Heart left ventricle (tissue), 16 donors: ENCODE measurements at regions of chr22 and their contacts with region 1.

Region 1: GRCh38 chr22:46798366-46799350 is 36.2 kb downstream of the TBC1D22A start:
- DNase-seq: peak; percentile 56 to 86 (median 71)
- ATAC-seq: peak; percentile 35 to 86 (median 84)
- H3K4me3 ChIP-seq: no peak overlapping the region
- H3K27ac ChIP-seq: peak overlapping the region in 1 of 12 donors; percentile 27
- H3K4me1 ChIP-seq: peaks cover 0 to 17% (median 11%) of the 10 kb centered on the region in 12 donors
- H3K27me3 ChIP-seq: no peaks in the 10 kb centered on the region
- CTCF ChIP-seq: peak; percentile 85 to 94 (median 92)
- POLR2A ChIP-seq: no peak

Region 2: GRCh38 chr22:46355371-46355995 is 443.2 kb before region 1 on chr22:
- intact Hi-C with region 1: loop called in 1 of 10 experiments (anchors 10 kb)
- DNase-seq: peak; percentile 62 to 74 (median 71)
- ATAC-seq: peak; percentile 11 to 49 (median 18)
- H3K4me3 ChIP-seq: no peak overlapping the region
- H3K27ac ChIP-seq: peak overlapping the region in 4 of 12 donors; percentile 20 to 94 (median 57)
- H3K4me1 ChIP-seq: peaks cover 0 to 47% (median 17%) of the 10 kb centered on the region in 12 donors
- H3K27me3 ChIP-seq: no peaks in the 10 kb centered on the region
- CTCF ChIP-seq: peak; percentile 58 to 83 (median 73)
- POLR2A ChIP-seq: no peak

Region 3: GRCh38 chr22:46762238-46763050 is 36.2 kb before region 1 on chr22 and contains the start of gene TBC1D22A:
- intact Hi-C with region 1: loop called in 4 of 10 experiments (anchors 5 kb)
- DNase-seq: peak; percentile 93 to 98 (median 95)
- ATAC-seq: peak; percentile 94 to 96 (median 95)
- H3K4me3 ChIP-seq: peak within 1 kb of the TSS; percentile 70 to 99 (median 88)
- H3K27ac ChIP-seq: peak within 1 kb of the TSS; percentile 85 to 99 (median 94)
- H3K4me1 ChIP-seq: peaks cover 0 to 60% (median 36%) of the 10 kb centered on the region in 12 donors
- H3K27me3 ChIP-seq: no peaks in the 10 kb centered on the region
- CTCF ChIP-seq: peak in 3 of 12 donors; percentile 7 to 9 (median 7)
- POLR2A ChIP-seq: peak; percentile 85 to 98
- total RNA-seq, gene TBC1D22A: 14.0 to 30.7 (median 18.6) TPM

Region 4: DNA sequence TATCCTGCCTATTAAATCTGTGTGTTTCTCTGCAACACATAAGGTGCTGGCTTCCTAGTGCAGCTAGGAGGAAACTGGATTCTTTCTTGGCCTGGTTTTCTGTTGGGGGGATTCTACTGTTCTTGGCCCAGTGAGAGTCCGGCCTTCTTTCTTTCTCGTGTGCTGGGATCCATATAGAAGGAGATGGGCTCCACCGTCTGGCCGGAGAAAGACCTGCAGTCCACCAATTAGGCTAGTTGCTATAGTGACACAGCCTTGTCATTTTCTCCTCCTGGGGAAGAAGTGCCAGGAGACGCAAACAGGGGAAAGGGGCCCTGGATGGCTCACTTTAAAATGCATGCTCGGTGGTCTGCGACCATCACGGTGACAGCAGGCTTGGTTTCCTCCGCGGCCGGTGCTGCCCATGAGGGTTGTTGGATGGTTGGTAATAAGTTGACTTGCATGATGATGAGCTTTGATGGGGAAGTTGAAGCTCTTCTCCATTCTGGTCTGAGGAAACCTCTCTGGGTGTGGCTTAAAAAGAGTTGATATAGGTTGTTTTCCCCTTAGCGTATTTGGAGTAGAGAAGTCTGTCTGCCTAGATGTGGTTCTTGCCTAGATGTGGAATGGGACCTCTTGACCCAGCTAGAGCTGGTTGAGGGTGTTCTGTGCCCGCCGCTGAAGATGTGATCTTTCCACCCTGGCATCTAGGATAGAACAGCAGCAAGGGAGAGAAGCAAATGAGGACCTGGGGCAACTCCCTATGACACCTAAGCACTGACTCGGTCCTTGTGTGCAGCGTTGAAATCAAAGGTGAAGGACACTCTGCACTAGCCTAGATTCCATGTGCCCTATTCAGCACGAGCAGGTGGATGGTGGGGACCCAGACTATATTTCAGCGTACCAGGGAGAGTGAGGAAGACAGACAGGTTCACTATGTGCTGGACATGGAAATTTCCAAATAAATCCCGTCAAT is 1694.0 kb after region 1 on chr22:
- intact Hi-C with region 1: loop called in 4 of 10 experiments (anchors 5 to 10 kb)
- DNase-seq: peak in 3 of 5 donors; percentile 37 to 66 (median 45)
- ATAC-seq: peak; percentile 57 to 85 (median 66)
- H3K4me3 ChIP-seq: no peak overlapping the region
- H3K27ac ChIP-seq: no peak overlapping the region
- H3K4me1 ChIP-seq: peaks cover 0 to 15% (median 4%) of the 10 kb centered on the region in 12 donors
- H3K27me3 ChIP-seq: peaks cover 28 to 75% (median 46%) of the 10 kb centered on the region in 9 donors
- CTCF ChIP-seq: peak; percentile 42 to 73 (median 64)
- POLR2A ChIP-seq: no peak